ENCODE measurements at regions of chr9 and their contacts with region 1.

Region 1: DNA sequence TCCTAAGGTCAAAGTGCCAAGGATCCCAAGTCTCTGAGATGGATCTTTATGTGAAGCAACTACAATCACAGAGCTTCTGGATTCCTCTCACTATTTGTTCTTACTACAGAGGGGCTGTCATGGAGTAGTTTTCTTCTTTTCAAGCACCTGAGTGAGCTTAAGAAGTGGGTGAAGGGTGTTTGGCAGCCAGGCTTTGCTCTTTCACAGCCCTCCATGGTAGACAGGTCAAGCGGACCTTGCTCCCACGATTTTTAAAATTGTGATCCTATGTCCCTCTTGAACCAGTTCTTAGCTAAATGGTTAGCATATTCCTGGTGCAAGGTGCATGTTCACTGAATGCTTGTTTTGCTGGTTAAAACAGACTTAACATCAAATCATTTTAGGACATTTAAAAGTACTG is 332.2 kb downstream of the GADD45G start:
- DNase-seq: no peak
- H3K4me3 ChIP-seq: no peak overlapping the region
- H3K27ac ChIP-seq: no peak overlapping the region
- H3K4me1 ChIP-seq: no peaks in the 10 kb centered on the region
- H3K27me3 ChIP-seq: no peaks in the 10 kb centered on the region
- CTCF ChIP-seq: no peak

Region 2: DNA sequence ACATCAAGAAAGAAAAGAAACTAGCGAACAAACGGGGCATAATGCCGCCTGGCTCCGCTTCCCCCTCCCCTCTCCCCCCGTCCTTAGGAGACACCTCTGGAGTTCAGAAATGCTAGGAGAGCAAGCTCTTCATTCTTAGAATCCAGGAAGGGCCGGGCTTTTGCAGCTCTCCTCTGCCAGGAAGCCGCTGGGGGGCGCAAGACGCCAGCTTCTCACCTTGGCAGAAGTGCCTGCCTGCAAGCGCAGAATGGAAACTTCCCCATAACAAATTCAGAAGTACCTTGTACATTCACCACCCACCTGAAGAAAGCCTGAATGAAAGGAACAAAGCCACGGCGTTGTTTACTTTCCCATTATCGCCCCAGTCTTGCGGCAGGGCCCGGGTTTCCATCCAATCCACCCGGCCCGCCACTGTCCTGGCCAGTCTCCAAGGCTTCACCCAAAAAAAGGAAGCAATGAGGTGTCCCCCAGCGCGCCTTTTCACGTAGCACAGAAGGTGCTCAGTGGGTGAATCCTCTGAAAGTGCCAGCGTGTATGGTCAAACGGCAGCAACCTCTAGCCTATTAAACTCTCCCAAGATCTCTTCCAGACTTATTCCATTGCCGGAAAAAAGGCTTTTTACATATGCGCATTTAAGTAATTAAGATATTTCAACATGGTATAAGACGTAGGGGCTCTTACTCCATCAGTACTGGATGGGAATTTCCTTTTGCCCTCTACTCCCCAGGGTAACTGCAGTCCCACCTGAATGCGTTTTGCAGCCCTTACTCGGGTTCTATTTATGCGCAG is 333.9 kb before region 1 on chr9:
- CTCF ChIA-PET with region 1: no interaction called
- dilution Hi-C with region 1: no loop called
- in situ Hi-C with region 1: no loop called
- intact Hi-C with region 1: no loop called
- DNase-seq: peak; percentile 72
- H3K4me3 ChIP-seq: peak overlapping the region; percentile 1 to 31 (median 19)
- H3K27ac ChIP-seq: no peak overlapping the region
- H3K4me1 ChIP-seq: peaks cover 35% of the 10 kb centered on the region
- H3K27me3 ChIP-seq: peaks cover 2% of the 10 kb centered on the region
- CTCF ChIP-seq: peak; percentile 84 to 95

Region 3: DNA sequence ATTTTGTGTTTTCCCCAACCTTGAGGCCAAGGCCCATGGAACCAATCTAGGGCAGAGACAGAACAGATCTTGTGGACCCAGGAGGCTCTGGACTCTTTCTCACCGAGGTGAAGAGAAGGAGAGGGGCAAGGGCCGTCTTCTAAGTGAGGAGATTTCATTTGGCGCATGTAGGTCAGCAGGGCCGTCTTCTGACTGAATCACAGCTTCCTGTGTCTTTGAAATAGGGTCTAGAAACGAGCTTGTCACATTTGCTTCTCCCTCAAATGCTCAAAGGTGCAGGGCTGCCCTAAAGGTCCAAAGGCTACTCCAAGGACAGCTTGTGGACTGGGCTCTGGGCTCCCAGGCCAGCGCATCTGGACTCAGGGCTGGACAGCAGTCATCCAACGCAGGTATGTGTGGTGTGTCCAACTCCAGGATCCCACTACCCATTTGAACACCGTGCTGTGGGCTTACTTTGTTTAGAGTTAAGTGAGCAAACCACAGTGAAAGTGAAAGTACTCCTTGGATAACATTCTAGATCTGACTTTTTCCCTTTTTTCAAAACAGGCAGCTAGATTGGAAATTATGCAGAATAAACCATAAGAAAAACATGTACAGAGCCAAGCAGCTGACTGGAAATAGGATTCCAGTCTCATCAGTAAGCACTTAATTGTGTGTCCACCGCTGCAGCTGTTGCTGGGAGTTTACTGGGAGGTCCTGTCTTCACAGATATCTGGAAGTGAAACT is 24.7 kb after region 1 on chr9:
- CTCF ChIA-PET with region 1: interaction called, 10 read pairs
- dilution Hi-C with region 1: no loop called
- in situ Hi-C with region 1: no loop called
- intact Hi-C with region 1: no loop called
- DNase-seq: no peak
- H3K4me3 ChIP-seq: no peak overlapping the region
- H3K27ac ChIP-seq: no peak overlapping the region
- H3K4me1 ChIP-seq: no peaks in the 10 kb centered on the region
- H3K27me3 ChIP-seq: no peaks in the 10 kb centered on the region
- CTCF ChIP-seq: no peak